GM13977 (cell line): ENCODE measurements at regions of chr20 and their contacts with region 1.

Region 1: DNA sequence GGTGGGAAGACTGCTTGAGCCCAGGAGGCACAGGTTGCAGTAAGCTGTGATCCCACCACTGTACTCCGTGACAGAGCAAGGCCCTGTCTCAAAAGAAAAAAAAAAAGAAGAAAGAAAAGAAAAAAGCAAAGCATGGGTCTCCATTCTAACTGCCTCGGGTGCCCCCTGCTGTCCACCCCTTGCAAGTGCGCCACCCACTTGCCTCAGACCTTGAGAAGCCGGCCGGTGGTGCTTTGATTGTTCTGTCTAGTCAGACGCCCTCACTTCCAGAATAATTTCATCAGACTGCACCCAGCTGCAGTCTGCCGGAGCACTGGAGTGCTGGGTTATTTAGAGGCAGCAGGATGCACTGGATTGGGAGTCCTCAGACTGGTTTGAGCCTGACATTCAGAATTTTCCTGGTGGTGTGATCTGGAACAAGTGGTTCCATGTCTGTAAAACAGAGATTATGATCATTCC is 17.6 kb upstream of the TM9SF4 start:
- DNase-seq: peak; percentile 77
- CTCF ChIP-seq: peak; percentile 94

Region 2: DNA sequence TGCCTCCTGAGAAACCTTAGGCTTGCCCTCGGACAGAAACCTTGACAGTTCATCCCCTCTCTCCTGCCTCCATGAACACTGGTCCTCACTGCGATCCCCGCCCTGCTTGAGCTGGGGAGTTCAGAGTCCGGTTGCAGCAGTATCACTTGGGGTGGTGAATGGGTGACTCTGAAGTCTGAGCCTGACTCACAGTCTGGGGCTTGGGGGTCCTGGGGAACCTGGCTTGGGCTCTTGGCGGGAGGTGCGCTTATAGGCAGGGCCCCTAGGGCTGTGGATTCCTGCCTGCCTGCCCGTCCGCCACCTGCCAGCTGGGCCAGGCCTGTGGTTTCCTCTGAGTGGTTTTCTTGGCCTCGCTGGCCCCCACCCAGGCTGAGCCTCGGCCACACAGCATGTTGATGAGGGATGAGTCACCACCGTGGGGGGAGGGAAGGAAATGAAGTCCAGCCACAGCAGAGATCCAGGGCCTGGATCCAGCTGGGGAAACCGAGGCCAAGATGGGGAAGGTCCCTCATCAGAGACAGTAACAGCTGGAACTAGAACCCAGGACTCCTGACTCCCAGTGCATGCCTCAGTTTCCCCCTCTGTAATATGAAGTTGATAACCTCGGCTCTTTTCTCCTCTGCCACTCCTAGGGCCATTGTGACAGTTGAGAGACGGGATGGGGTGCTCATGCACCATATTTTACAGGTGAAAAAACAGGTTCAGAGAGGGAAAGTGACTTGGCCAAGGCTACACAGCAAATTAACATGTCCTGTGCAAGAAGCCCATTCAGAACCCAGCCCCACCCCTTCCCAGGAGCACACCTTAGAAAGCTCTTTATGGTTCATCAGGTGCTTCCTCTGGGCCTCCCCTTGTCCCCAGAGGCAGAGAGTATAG is 255.7 kb before region 1 on chr20:
- in situ Hi-C with region 1: loop called (anchors 25 kb)
- DNase-seq: peak; percentile 67
- CTCF ChIP-seq: no peak

Region 3: GRCh38 chr20:31857861-31858759 is 233.8 kb before region 1 on chr20:
- in situ Hi-C with region 1: no loop called
- DNase-seq: peak; percentile 77
- CTCF ChIP-seq: no peak